Transverse colon (tissue), 4 donors: ENCODE measurements at regions of chr12 and their contacts with region 1.

Region 1: GRCh38 chr12:121620328-121620891 is 5.9 kb upstream of the ORAI1 start:
- DNase-seq: no peak
- H3K4me3 ChIP-seq: no peak overlapping the region
- H3K27ac ChIP-seq: no peak overlapping the region
- H3K4me1 ChIP-seq: peaks cover 0 to 10% (median 4%) of the 10 kb centered on the region in 4 donors
- H3K27me3 ChIP-seq: no peaks in the 10 kb centered on the region
- CTCF ChIP-seq: no peak
- EP300 ChIP-seq: no peak
- POLR2A ChIP-seq: no peak

Region 2: GRCh38 chr12:121560392-121561008 is 59.9 kb before region 1 on chr12:
- in situ Hi-C with region 1: loop called in 1 of 4 experiments (anchors 10 kb)
- intact Hi-C with region 1: loop called (anchors 5 kb)
- DNase-seq: peak; percentile 17
- H3K4me3 ChIP-seq: no peak overlapping the region
- H3K27ac ChIP-seq: no peak overlapping the region
- H3K4me1 ChIP-seq: peaks cover 0 to 6% (median 0%) of the 10 kb centered on the region in 4 donors
- H3K27me3 ChIP-seq: no peaks in the 10 kb centered on the region
- CTCF ChIP-seq: no peak
- EP300 ChIP-seq: no peak
- POLR2A ChIP-seq: no peak